Pancreas (tissue), 10 donors: ENCODE measurements at regions of chr22 and their contacts with region 1.

Region 1: GRCh38 chr22:36387752-36388518 is at the start of gene MYH9:
- DNase-seq: peak; percentile 98 to 100 (median 100)
- ATAC-seq: peak; percentile 75 to 88 (median 82)
- H3K4me3 ChIP-seq: peak within 1 kb of the TSS; percentile 86 to 99 (median 95)
- H3K27ac ChIP-seq: peak within 1 kb of the TSS; percentile 95 to 98 (median 96)
- H3K4me1 ChIP-seq: peaks cover 12 to 28% (median 19%) of the 10 kb centered on the region in 3 donors
- H3K27me3 ChIP-seq: no peaks in the 10 kb centered on the region
- CTCF ChIP-seq: no peak
- total RNA-seq, gene MYH9: 259 to 554 (median 412) TPM

Region 2: GRCh38 chr22:36301384-36301828 is 86.5 kb before region 1 on chr22:
- intact Hi-C with region 1: no loop called
- DNase-seq: peak; percentile 55 to 92 (median 82)
- ATAC-seq: peak; percentile 61 to 86 (median 84)
- H3K4me3 ChIP-seq: no peak overlapping the region
- H3K27ac ChIP-seq: no peak overlapping the region
- H3K4me1 ChIP-seq: no peaks in the 10 kb centered on the region
- H3K27me3 ChIP-seq: no peaks in the 10 kb centered on the region
- CTCF ChIP-seq: peak; percentile 89 to 96 (median 92)

Region 3: GRCh38 chr22:36331306-36331911 is 56.5 kb before region 1 on chr22:
- intact Hi-C with region 1: loop called in 2 of 3 experiments (anchors 10 kb)
- DNase-seq: peak in 3 of 6 donors; percentile 65 to 68 (median 67)
- ATAC-seq: peak in 3 of 4 donors; percentile 13 to 57 (median 46)
- H3K4me3 ChIP-seq: no peak overlapping the region
- H3K27ac ChIP-seq: peak overlapping the region; percentile 59 to 92 (median 72)
- H3K4me1 ChIP-seq: peaks cover 85 to 88% (median 85%) of the 10 kb centered on the region in 3 donors
- H3K27me3 ChIP-seq: no peaks in the 10 kb centered on the region
- CTCF ChIP-seq: no peak